ENCODE measurements at regions of chr1 and their contacts with region 1.

Region 1: DNA sequence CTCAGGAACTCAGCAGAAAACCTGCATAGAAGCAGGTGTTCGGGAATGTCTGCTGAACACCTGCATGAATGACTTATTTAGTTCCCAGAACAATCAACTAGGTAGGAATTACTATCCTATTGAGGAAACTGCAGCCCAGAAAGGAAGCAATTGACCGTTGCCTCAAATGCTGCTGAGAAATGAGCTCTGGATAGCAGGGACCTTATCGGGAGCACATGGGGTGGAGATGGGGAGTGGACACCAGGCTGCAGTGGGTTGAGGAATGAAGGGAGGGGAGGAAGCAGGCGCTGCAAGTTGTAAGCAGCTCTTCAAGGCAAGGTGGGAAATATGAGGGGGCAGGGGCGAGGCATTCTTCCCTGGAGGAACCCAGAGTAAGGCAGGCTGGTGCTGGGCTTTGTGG is 10.8 kb upstream of the CDCP2 start:
- DNase-seq: no peak
- ATAC-seq: no peak
- H3K4me3 ChIP-seq: no peak overlapping the region
- H3K27ac ChIP-seq: no peak overlapping the region
- H3K4me1 ChIP-seq: no peaks in the 10 kb centered on the region
- H3K27me3 ChIP-seq: no peaks in the 10 kb centered on the region
- CTCF ChIP-seq: no peak

Region 2: DNA sequence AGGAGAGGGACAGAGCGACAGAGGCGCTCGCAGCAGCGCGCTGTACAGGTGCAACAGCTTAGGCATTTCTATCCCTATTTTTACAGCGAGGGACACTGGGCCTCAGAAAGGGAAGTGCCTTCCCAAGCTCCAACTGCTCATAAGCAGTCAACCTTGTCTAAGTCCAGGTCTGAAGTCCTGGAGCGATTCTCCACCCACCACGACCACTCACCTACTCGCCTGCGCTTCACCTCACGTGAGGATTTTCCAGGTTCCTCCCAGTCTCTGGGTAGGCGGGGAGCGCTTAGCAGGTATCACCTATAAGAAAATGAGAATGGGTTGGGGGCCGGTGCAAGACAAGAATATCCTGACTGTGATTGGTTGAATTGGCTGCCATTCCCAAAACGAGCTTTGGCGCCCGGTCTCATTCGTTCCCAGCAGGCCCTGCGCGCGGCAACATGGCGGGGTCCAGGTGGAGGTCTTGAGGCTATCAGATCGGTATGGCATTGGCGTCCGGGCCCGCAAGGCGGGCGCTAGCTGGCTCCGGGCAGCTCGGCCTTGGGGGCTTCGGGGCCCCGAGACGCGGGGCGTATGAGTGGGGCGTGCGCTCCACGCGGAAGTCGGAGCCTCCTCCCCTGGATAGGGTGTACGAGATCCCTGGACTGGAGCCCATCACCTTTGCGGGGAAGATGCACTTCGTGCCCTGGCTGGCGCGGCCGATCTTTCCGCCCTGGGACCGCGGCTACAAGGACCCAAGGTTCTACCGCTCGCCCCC is 36.4 kb after region 1 on chr1 and contains the starts of genes CYB5RL and MRPL37:
- CTCF ChIA-PET with region 1: no interaction called
- POLR2A ChIA-PET with region 1: no interaction called
- in situ Hi-C with region 1: no loop called
- intact Hi-C with region 1: no loop called
- DNase-seq: peak; percentile 94
- ATAC-seq: peak; percentile 99
- H3K4me3 ChIP-seq: peak within 1 kb of the TSS; percentile 91 to 93
- H3K27ac ChIP-seq: peak within 1 kb of the TSS; percentile 95
- H3K4me1 ChIP-seq: peaks cover 9% of the 10 kb centered on the region
- H3K27me3 ChIP-seq: no peaks in the 10 kb centered on the region
- CTCF ChIP-seq: no peak
- total RNA-seq, gene CYB5RL: 19.4 TPM
- total RNA-seq, gene MRPL37: 138 TPM

Region 3: GRCh38 chr1:54253480-54253879 is 89.9 kb after region 1 on chr1:
- CTCF ChIA-PET with region 1: no interaction called
- POLR2A ChIA-PET with region 1: interaction called, 13 read pairs
- in situ Hi-C with region 1: no loop called
- intact Hi-C with region 1: no loop called
- DNase-seq: no peak
- ATAC-seq: peak; percentile 71
- H3K4me3 ChIP-seq: no peak overlapping the region
- H3K27ac ChIP-seq: no peak overlapping the region
- H3K4me1 ChIP-seq: peaks cover 36% of the 10 kb centered on the region
- H3K27me3 ChIP-seq: no peaks in the 10 kb centered on the region
- CTCF ChIP-seq: no peak